Activated CD8-positive, alpha-beta memory T cell treated with anti-CD3 and anti-CD28 coated beads, Interleukin-2, amount 10 ng/mL, durations not matched to agents 7 days and 5 days (primary cell): ENCODE measurements at regions of chr7 and their contacts with region 1.

Region 1: DNA sequence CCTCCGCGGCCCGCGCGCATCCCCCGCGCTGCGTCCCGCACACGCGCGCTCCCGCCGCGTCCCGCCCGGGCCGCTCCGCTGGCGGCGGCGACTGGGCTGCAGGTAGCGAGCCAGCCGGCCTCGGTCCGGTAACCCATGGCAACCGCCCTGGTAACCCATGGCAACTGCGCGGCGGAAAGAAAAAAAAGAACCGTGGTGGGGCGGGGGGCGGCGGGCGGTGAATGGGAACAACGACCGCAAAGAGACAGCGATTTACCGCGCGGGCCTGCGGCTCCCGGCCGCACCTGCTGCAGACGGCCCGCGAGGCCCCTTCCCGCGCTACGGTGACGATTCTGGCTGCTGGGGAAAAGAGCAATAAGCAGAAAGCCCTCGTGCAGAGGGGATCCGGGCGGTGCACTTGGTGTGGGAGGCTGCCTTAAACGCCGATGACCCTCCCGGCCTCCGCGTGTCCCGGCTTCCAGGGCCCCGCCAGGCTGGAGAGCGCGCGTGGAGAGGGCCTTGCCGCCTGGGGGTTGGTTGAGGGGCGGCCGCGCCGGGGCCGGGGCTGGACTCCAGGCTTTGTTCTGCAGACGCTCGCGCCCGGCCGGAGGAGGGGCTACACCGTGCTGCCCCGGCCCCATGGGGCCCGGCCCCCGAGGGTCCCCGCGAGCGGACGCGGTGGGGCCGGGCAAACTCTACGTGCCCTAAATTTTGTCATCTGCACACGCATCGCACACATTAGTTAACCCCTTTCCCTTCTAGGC is 84.7 kb downstream of the SNX10 start:
- DNase-seq: peak; percentile 59
- ATAC-seq: peak; percentile 54
- H3K4me3 Mint-ChIP-seq: peak overlapping the region; percentile 77
- H3K27ac Mint-ChIP-seq: peak overlapping the region; percentile 59
- H3K4me1 Mint-ChIP-seq: peaks cover 5% of the 10 kb centered on the region
- H3K27me3 Mint-ChIP-seq: peaks cover 24% of the 10 kb centered on the region

Region 2: DNA sequence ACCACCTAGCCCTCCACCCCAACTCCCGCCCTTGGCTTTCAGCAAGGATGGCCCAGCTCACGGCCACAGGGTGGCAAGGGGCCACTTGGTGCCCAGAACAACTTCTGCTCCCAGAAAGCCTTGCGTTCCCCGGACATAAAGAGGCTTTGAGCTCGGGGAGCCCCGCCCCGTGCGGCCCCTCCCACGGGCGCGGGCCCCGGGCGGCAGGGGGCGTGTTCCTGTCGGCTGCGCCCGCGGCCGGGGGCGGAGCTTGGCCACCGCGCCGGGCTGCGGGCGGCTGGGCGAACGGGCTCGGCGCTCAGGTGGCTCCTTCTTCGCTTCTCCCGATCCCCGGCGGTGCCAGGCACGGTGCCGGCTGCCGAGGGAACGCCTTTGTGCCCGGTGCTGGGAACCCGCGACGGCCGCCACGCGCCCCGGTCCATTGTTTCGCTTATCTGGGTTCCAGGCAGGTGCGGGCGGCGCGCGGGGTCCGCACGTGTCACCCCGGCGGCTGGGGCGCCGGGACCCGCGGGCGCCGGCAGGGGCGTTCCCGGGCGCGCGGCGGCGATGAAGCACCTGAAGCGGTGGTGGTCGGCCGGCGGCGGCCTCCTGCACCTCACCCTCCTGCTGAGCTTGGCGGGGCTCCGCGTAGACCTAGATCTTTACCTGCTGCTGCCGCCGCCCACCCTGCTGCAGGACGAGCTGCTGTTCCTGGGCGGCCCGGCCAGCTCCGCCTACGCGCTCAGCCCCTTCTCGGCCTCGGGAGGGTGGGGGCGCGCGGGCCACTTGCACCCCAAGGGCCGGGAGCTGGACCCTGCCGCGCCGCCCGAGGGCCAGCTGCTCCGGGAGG is 224.2 kb before region 1 on chr7 and contains the start of gene NFE2L3:
- CTCF ChIA-PET with region 1: no interaction called
- DNase-seq: peak; percentile 89
- ATAC-seq: peak; percentile 77
- H3K4me3 Mint-ChIP-seq: peak within 1 kb of the TSS; percentile 89
- H3K27ac Mint-ChIP-seq: peak within 1 kb of the TSS; percentile 99
- H3K4me1 Mint-ChIP-seq: peaks cover 52% of the 10 kb centered on the region
- H3K27me3 Mint-ChIP-seq: no peaks in the 10 kb centered on the region
- total RNA-seq, gene NFE2L3: 20.1 to 44.4 TPM

Region 3: DNA sequence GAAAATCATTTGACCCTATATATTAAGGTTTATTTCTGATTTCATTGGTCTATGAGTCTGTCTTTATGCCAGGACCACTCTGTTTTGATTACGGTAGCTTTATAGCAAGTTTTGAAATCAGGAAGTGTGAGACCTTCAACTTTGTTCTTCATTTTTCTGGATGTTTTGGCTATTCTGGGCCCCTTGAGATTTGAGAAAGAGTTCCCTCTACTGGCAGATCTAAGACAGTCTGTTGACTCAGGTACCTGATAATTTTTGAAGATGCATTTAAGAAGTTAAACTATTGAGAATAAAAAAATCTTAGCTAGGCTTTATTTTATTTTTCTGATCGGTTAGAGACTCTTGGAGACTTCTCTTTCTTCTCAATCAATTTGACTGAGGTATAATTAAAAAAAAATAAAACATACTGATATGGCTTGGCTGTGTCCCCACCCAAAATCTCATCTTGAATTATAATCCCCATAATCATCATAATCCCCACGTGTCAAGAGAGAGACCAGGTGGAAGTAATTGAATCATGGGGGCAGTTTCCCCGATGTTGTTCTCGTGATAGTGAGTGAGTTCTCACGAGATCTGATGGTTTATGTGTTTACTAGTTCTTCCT is 124.5 kb after region 1 on chr7:
- CTCF ChIA-PET with region 1: interaction called, 11 read pairs
- DNase-seq: no peak
- ATAC-seq: no peak
- H3K4me3 Mint-ChIP-seq: no peak overlapping the region
- H3K27ac Mint-ChIP-seq: no peak overlapping the region
- H3K4me1 Mint-ChIP-seq: no peaks in the 10 kb centered on the region
- H3K27me3 Mint-ChIP-seq: peaks cover 20% of the 10 kb centered on the region

Region 4: DNA sequence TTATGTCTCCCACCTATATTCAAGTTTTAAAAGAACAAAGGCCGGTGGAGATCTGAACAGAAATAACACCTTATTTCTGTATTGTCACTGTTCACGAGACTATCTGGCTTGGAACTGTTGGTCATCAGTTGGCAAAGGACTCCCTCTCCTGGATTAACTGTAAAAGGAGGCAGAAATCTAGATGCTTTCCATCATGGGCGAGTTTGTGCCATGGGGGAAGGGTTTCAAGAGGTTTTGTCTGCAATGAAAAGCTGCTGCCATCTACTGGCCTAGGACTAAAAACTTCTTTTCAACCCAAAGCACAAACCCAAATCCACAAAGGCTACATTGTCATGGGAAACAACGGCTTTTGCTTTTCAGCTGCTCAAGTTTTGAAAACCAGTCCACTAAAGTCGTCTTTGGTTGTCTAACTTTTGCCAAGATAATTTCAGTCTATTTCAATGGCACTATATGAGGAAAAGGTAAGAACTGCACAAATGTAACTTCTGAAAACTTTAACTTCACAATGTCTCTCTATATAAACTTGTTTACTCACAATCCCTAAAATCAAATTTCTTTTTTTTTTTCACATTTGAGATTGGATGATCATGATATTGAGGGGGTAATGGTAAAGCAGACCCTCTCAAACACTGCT is 291.3 kb after region 1 on chr7:
- CTCF ChIA-PET with region 1: interaction called, 13 read pairs
- DNase-seq: peak; percentile 75
- ATAC-seq: peak; percentile 76
- H3K4me3 Mint-ChIP-seq: no peak overlapping the region
- H3K27ac Mint-ChIP-seq: no peak overlapping the region
- H3K4me1 Mint-ChIP-seq: peaks cover 16% of the 10 kb centered on the region
- H3K27me3 Mint-ChIP-seq: peaks cover 8% of the 10 kb centered on the region